ENCODE measurements at regions of chr13 and their contacts with region 1.

Region 1: DNA sequence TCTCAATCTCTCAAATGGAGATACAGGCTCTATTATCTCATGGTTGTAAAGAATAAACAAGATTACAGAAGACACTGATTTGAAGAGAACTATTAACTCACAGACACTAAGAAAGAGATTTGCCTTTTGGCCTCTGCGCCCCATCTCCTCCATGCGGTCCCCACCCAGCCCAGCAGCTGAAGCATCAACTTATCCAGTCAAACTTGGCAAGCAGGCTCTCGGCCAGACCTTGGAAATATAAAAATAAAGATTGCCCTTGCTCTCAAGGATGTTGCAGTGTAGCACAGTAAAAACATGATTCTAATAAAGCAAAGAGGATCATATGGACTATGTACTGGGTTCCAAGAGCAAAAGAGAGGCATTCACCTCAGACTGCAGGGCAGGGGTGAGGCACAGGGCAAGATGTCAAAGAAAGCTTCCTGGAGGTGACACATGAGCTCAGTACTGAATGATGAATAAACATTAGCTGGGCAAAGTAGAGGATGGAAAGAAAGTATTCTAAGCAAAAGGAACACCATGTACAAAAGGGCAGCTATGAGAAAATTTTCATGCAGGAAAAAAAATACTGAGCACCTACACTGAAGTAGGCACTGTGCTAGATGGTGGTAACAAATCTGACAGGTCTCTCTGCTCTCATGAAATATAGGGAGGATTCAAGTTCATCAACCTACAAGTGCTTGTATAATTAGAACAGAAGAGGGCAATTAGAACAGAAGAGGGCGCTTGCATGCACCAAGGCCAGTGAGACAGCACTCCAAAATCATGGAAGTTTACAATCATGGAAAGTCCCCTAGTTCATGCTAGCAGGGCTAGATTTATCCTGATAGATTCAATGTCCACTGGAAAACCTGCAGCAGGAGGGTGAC is 85.0 kb downstream of the SACS start:
- DNase-seq: no peak
- H3K4me3 ChIP-seq: no peak overlapping the region
- H3K27ac ChIP-seq: no peak overlapping the region
- H3K4me1 ChIP-seq: no peaks in the 10 kb centered on the region
- H3K27me3 ChIP-seq: no peaks in the 10 kb centered on the region
- CTCF ChIP-seq: no peak

Region 2: GRCh38 chr13:21625366-21625765 is 1723.1 kb before region 1 on chr13:
- CTCF ChIA-PET with region 1: no interaction called
- POLR2A ChIA-PET with region 1: interaction called, 10 read pairs
- intact Hi-C with region 1: no loop called
- DNase-seq: no peak
- H3K4me3 ChIP-seq: no peak overlapping the region
- H3K27ac ChIP-seq: no peak overlapping the region
- H3K4me1 ChIP-seq: no peaks in the 10 kb centered on the region
- H3K27me3 ChIP-seq: peaks cover 41% of the 10 kb centered on the region
- CTCF ChIP-seq: peak; percentile 63

Region 3: DNA sequence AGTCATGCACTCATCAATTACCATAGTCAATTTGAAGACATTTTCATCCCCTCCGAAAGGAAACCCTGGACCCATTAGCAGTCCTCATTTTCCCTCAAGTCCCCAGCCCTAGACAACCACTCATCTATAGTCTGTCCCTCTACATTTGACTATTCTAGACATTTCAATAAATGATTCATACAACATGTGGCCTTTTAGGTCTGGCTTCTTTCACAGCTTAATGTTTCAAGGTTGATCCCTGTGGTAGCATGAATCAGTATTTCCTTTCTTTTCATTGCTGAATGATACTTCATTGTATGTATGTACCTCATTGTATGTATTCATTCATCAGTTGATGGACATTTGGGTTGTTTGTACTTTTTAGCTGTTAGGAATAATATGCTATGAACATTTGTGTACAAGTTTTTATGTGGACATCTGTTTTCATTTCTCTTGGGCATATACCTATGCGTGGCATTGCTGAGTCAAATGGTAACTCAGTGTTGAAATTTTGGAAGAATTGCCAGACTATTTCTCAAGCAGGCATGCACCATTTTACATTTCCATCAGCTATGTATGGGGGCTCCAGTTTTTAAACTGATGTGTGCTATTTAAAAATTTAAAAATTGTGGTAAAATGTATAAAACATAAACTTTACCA is 830.5 kb after region 1 on chr13:
- CTCF ChIA-PET with region 1: no interaction called
- POLR2A ChIA-PET with region 1: no interaction called
- intact Hi-C with region 1: no loop called
- DNase-seq: no peak
- H3K4me3 ChIP-seq: no peak overlapping the region
- H3K27ac ChIP-seq: no peak overlapping the region
- H3K4me1 ChIP-seq: no peaks in the 10 kb centered on the region
- H3K27me3 ChIP-seq: no peaks in the 10 kb centered on the region
- CTCF ChIP-seq: no peak

Measured in PC-9 (cell line).